ENCODE measurements at regions of chr4 and their contacts with region 1.

Region 1: GRCh38 chr4:111641955-111642579 is 503.2 kb upstream of the FAM241A start:
- DNase-seq: peak; percentile 67
- H3K4me3 ChIP-seq: no peak overlapping the region
- CTCF ChIP-seq: peak; percentile 82

Region 2: GRCh38 chr4:111666826-111667360 is 24.8 kb after region 1 on chr4:
- CTCF ChIA-PET with region 1: interaction called, 10 read pairs
- POLR2A ChIA-PET with region 1: no interaction called
- DNase-seq: no peak
- H3K4me3 ChIP-seq: no peak overlapping the region
- CTCF ChIP-seq: no peak

Region 3: DNA sequence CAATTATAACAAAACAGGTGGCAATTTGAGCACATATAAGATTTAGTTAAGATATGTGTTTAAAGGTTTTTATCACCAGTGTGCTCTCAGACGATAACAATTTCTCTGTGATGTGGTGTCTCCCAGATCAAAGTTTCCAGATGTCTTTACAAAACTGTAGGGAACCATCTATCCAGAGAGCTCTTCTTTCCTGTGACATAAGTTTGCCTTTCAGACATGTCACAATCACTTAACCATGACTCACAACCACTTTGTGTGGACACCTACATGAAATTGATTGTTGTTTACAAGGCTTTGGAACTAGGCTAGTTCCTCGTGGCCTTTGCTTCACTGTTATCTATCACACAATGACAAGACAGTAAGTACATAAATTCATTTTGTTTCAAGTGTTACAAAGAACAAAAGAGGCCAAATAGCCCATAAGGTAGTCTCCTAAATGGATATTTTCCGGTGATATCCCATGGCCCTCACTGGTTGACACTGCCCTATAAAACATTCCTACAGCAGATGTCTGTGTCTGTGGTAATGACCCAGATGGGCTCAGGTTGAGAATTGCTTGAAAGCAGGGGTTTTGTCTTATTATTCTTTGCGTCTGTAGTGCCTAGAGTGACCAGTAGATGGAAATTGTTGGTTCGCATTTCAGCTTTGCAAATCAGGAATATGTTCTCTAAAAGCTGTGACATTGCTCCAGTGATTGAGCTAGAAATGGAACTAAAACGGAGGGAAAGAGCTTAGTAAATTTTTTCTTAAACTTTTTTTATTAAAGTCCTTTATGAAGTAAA is 205.4 kb after region 1 on chr4:
- CTCF ChIA-PET with region 1: interaction called, 14 read pairs
- POLR2A ChIA-PET with region 1: no interaction called
- DNase-seq: no peak
- H3K4me3 ChIP-seq: no peak overlapping the region
- CTCF ChIP-seq: peak; percentile 14

Region 4: GRCh38 chr4:111937368-111937767 is 295.3 kb after region 1 on chr4:
- CTCF ChIA-PET with region 1: interaction called, 30 read pairs
- POLR2A ChIA-PET with region 1: no interaction called
- DNase-seq: no peak
- H3K4me3 ChIP-seq: no peak overlapping the region
- CTCF ChIP-seq: peak; percentile 1